Dendritic cell treated with granulocyte-macrophage colony-stimulating factor and Interleukin-4, amounts not matched to agents 40 ng/mL and 50 ng/mL, for 4 days (primary cell): ENCODE measurements at regions of chr15 and their contacts with region 1.

Region 1: GRCh38 chr15:52466134-52466701 is 62.5 kb downstream of the MYO5A start:
- H3K4me3 Mint-ChIP-seq: peak overlapping the region; percentile 56
- H3K27ac Mint-ChIP-seq: peak overlapping the region; percentile 85
- H3K4me1 Mint-ChIP-seq: peaks cover 57% of the 10 kb centered on the region
- H3K27me3 Mint-ChIP-seq: no peaks in the 10 kb centered on the region

Region 2: DNA sequence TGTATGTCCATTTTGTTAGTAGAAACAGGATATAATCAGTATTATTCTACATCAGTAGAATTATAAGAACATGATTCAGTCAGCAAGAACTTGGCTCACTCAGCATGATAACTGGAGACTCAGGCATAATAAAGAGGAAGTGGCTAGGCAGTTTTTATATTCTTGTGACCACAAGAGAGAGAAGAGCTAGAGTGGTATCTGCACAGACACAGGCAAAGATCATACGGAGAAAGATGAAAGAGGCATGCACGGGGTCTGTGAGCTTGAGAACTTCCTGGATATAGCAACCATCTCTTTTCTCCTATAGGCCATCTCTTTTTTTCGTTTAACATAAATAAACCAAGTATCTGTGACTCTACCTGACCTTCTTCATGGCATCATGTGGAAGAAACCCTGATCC is 15.7 kb after region 1 on chr15:
- intact Hi-C with region 1: loop called (anchors 2 kb)
- H3K4me3 Mint-ChIP-seq: no peak overlapping the region
- H3K27ac Mint-ChIP-seq: peak overlapping the region; percentile 87
- H3K4me1 Mint-ChIP-seq: peaks cover 81% of the 10 kb centered on the region
- H3K27me3 Mint-ChIP-seq: no peaks in the 10 kb centered on the region

Region 3: DNA sequence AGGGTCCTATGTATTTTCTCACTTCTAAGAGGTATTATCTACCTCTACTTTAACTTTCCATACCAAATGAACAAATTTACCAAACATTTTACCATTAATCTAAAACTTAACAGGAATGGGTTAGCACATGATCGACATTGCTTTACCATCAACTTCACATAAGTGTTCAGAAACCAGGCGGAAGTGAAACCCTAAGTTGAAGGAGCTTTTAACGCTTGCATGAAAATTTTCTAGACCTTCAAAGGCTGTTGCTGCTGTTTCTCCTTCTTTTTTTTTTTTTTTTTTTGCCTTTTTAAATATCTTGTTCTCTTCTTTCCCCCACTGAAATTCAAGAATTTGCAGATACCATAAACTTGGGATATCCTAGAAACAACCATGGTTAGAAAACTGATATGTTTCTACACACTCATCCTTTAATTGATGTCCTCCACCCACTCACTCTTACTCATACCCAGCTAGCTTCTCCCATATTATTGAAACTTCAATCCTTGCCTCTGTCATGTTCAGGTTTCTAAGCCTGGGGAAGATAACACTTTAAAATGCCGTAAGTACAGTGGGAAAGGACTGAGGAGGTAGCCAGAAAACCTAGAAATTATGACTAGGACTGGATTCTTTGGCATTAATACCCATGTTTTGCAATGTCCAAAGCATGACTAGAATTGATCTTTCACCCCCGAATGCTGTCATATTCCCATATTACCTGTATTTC is 37.7 kb after region 1 on chr15:
- intact Hi-C with region 1: loop called (anchors 5 kb)
- H3K4me3 Mint-ChIP-seq: peak overlapping the region; percentile 37
- H3K27ac Mint-ChIP-seq: peak overlapping the region; percentile 80
- H3K4me1 Mint-ChIP-seq: peaks cover 69% of the 10 kb centered on the region
- H3K27me3 Mint-ChIP-seq: no peaks in the 10 kb centered on the region